AG04450 (cell line): ENCODE measurements at regions of chr11 and their contacts with region 1.

Region 1: GRCh38 chr11:94519478-94520084 is 7.3 kb downstream of the C11orf97 start:
- DNase-seq: no peak
- H3K4me3 ChIP-seq: no peak overlapping the region
- H3K27ac ChIP-seq: no peak overlapping the region
- H3K27me3 ChIP-seq: peaks cover 16% of the 10 kb centered on the region
- CTCF ChIP-seq: peak; percentile 65

Region 2: DNA sequence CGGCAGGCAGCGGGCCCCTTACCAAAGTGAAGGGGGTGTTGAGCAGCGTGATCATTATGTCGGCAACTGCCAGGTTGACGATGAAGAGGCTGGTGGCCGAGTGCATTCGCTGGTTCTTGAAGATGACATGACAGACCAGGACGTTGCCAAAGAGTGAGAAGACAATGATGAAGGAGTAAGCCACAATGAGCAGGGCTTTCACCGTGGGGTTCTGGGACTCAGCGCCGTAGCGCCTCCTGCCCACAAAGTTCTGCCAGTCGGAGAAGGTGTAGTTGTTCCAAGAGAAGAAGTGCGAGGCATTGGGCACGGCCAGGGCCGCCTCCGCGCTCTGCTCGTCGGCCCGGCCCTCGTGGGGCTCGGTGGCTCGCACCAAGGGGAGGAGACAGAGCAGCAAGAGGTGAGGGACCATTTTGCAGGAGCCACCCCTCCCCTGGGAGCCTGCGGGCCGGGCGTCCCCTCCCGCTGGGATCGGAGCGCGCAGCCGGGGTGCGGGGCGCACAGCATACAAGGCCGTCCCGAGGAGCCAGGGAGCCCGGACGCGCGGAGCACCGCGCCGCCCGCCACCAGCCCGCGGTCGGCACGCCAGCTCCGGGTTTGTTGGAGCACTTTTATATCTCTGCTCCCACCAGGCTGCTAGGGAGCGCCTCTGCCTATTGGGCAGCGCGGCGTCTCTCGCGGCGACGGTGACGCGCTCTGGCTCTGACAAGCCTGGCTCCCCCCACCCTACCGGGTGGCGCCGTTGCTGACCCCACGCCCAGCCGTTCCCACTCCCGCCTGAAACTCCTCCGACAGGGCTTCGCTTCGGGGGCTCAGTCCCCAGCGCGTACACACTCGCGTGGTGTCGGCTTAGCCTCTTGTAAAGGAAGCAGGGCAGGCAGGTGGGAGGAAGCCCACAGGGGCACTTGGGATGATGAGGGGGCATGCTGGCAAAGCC is 118.5 kb before region 1 on chr11 and contains the start of gene GPR83:
- CTCF ChIA-PET with region 1: no interaction called
- POLR2A ChIA-PET with region 1: no interaction called
- DNase-seq: no peak
- H3K4me3 ChIP-seq: peak within 1 kb of the TSS; percentile 58
- H3K27ac ChIP-seq: no peak within 1 kb of the TSS
- H3K27me3 ChIP-seq: peaks cover 46% of the 10 kb centered on the region
- CTCF ChIP-seq: no peak
- polyA plus RNA-seq, gene GPR83: 0.02 and 0.04 TPM in 2 replicates

Region 3: DNA sequence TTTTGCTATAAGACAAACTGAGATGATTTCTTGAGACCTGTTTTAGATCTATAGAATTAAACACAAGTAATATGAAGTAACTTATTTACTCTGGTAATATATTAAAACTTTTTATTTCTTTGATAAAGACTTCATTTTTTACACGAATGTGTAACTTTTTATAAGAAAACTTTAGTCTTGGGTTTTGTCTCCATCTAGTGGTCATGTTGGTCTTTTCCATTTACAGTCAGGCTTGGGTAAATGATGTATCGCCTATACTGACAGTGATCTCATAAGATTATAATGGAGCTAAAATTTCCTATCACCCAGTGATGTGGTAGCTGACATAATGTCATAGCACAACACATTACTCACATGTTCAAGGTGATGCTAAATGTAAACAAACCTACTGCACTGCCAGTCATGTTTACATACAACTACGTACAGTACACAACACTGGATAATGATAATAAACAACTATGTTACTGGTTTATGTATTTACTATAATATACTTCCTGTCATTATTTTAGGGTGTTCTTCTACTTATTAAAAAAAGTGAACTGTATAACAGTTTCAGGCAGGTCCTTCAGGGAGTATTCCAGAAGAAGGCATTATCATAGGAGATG is 14.8 kb before region 1 on chr11:
- CTCF ChIA-PET with region 1: interaction called, 12 read pairs
- POLR2A ChIA-PET with region 1: no interaction called
- DNase-seq: peak; percentile 34
- H3K4me3 ChIP-seq: no peak overlapping the region
- H3K27ac ChIP-seq: no peak overlapping the region
- H3K27me3 ChIP-seq: no peaks in the 10 kb centered on the region
- CTCF ChIP-seq: peak; percentile 71